Head of caudate nucleus (tissue), 42 donors: ENCODE measurements at regions of chr10 and their contacts with region 1.

Region 1: DNA sequence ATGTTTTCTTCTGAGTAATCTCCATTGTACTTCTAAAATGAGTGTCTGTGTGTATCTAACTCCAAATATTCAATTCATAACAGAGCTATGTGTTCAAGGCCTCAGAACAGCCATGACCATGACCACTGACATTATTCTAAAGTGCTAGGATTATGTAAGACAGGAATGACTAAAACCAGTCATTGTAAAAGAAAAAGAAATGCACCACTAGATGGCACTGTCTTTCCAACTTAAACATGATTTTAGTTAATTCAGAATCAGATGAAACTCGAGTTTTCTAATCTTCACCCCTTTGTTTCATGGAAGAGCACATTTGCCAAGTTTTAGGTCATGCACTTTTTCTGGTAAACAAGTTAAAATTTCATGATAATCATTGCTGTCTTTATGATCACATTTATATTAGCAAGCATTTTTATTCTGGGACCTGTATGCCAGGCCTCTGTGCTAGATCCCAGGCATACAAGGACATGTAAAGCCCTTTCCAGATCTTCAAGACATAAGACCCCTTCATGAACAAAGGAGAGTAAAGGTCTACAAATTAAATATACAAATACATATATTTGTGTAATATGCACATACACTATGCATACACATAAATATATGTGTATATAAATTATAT is 26.1 kb upstream of the RSU1 start:
- DNase-seq: peak in 3 of 42 donors; percentile 7 to 48 (median 16)

Region 2: GRCh38 chr10:17257466-17258321 is 414.3 kb after region 1 on chr10:
- intact Hi-C with region 1: loop called (anchors 5 kb)
- DNase-seq: peak in 37 of 42 donors; percentile 4 to 87 (median 58)

Region 3: GRCh38 chr10:17430647-17431355 is 587.4 kb after region 1 on chr10:
- intact Hi-C with region 1: loop called (anchors 5 kb)
- DNase-seq: peak; percentile 41 to 88 (median 73)